Activated CD8-positive, alpha-beta T cell treated with anti-CD3 and anti-CD28 coated beads for 36 hours (primary cell): ENCODE measurements at regions of chr2 and their contacts with region 1.

Region 1: DNA sequence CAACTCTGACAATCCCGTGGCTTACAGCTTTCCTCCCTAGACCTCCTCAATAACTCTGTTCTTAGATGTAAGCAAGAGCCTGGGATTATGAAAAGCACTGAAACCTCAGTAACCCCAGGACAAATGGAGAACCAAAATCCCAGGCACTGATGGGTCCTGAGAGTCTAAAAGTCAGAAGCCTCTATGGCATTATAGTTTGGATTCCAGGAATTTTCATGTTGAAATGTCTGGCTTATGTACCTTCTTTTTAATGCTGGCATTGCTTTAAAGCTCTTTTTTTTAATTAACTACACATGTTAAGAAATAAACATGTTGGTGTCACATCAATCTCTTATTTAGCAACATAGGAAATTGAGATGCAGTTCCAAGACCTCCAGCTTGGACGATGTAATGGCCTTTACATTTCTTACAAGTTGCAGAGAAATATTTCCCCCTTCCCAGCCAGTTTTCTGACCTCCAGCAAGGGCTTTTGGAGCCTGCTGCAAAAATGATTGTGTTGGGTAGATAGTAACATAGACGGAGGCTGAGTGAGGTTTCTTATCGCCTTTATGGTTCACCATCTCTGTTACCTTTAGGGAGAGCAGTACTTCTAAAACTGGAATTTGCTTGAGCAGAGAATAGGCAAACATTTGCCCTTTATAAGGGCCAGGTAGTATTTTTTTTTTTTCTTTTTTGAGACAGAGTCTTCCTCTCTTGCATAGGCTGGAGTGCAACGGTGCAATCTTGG is 84.8 kb upstream of the RASGRP3 start:
- DNase-seq: no peak
- ATAC-seq: no peak
- H3K4me3 Mint-ChIP-seq: no peak overlapping the region
- H3K27ac Mint-ChIP-seq: no peak overlapping the region
- H3K4me1 Mint-ChIP-seq: no peaks in the 10 kb centered on the region
- H3K27me3 Mint-ChIP-seq: no peaks in the 10 kb centered on the region
- CTCF ChIP-seq: no peak

Region 2: DNA sequence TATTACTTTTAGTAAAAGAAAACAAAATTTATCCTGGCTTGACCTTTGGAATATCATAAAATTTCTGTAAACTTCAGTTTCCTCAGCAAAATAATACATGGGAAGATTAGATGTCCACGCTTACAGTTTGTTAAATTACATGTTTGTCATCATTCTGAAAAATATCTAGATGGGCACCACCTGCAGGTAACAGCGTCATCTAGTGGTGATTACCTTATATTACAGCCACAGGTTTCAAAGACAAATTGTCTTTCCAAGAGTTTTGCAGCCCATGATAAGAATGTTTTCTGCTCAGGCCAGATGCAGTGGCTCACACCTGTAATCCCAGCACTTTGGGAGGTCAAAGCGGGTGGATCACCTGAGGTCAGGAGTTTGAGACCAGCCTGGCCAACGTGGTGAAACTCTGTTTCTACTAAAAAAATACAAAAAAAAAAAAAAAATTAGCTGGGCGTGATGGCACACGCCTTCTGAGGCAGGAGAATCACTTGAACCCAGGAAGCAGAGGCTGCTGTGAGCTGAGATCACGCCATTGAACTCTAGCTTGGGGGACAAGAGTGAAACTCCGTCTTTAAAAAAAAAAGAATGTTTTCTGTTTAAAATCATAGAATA is 11.6 kb before region 1 on chr2:
- CTCF ChIA-PET with region 1: interaction called, 13 read pairs
- POLR2A ChIA-PET with region 1: no interaction called
- intact Hi-C with region 1: no loop called
- DNase-seq: no peak
- ATAC-seq: no peak
- H3K4me3 Mint-ChIP-seq: no peak overlapping the region
- H3K27ac Mint-ChIP-seq: no peak overlapping the region
- H3K4me1 Mint-ChIP-seq: no peaks in the 10 kb centered on the region
- H3K27me3 Mint-ChIP-seq: peaks cover 5% of the 10 kb centered on the region
- CTCF ChIP-seq: peak; percentile 70

Region 3: DNA sequence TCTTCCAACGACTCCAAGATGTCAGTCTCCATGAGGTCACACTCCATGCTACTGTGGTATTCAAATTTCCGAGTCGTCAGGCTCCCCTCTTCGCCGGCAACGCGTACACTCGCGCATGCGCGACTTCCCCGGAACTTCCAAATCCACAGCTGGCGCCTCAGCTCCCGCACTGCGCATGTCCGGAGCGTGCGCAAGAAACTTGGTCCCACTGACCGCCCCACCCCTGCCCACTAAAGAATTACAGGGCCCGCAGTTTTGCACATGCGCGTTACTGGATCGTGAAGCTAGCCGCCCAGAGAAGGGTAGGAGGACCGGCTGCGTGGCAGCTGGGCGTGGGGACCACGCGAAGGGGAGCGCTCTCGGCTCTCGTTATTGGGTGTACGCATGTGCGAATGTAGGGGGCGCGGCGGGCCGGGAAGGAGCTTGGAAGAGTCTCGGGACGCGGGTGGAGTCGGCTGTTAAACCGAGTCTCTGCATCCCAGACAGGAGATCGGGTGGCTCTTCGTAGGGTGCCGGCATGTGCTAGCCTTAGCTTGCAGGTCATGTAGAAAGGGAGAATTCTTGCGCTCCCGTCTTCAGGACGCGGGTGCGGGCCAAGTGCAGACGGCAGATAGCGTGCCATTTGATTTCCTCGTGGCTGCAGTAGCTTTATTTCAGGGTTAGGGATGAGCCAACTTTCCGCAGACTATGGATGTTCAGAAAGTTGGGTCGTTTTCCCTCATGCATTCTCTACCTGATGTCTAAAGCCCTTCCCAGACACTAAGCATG is 207.7 kb after region 1 on chr2 and contains the start of gene FAM98A:
- CTCF ChIA-PET with region 1: no interaction called
- POLR2A ChIA-PET with region 1: no interaction called
- intact Hi-C with region 1: no loop called
- DNase-seq: peak; percentile 98
- ATAC-seq: peak; percentile 94
- H3K4me3 Mint-ChIP-seq: peak within 1 kb of the TSS; percentile 95
- H3K27ac Mint-ChIP-seq: peak within 1 kb of the TSS; percentile 92
- H3K4me1 Mint-ChIP-seq: peaks cover 25% of the 10 kb centered on the region
- H3K27me3 Mint-ChIP-seq: no peaks in the 10 kb centered on the region
- CTCF ChIP-seq: no peak
- total RNA-seq, gene FAM98A: 52.3 to 63.0 TPM